Spleen (tissue), 13 donors: ENCODE measurements at regions of chr18 and their contacts with region 1.

Region 1: GRCh38 chr18:76709659-76710645 is 112.4 kb upstream of the ZNF236 start:
- DNase-seq: peak; percentile 87
- H3K4me3 ChIP-seq: peak overlapping the region in 1 of 8 donors; percentile 36
- H3K27ac ChIP-seq: no peak overlapping the region
- H3K4me1 ChIP-seq: peaks cover 0 to 8% (median 6%) of the 10 kb centered on the region in 6 donors
- H3K27me3 ChIP-seq: no peaks in the 10 kb centered on the region
- CTCF ChIP-seq: peak; percentile 59 to 92 (median 87)
- POLR2A ChIP-seq: no peak

Region 2: DNA sequence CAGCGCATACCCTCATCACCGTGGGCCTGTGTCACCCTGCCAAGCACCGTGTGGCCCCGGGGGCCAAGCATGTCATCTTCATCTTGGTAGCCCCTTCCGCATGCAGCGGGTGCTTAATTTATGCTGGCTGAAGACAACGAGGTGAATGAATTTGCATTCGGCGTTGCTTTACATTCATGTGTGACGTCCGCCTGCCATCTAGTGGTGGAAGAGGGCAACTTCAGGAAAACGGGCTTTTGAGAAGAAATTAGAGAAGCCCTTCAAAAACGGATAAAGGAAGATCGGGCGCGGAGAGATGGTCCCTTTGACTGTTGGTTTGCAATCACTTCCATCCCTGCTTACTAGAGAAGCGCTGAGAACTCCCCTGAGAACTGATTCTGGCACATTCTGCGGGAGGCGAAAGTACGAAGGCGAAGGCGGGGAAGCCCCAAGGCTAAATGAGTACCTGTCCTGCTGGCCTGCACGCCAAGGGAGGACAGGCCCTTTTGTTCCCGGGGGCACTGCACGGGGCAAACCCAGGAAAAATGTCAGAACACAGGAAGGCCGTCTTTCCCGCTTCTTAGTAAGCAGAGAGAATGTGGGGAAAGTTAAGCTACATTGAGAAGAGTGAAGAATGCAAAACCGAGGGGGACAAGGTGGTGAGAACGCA is 360.8 kb before region 1 on chr18:
- intact Hi-C with region 1: no loop called
- DNase-seq: no peak
- H3K4me3 ChIP-seq: peak overlapping the region in 1 of 8 donors; percentile 8
- H3K27ac ChIP-seq: no peak overlapping the region
- H3K4me1 ChIP-seq: peaks cover 0 to 11% (median 8%) of the 10 kb centered on the region in 6 donors
- H3K27me3 ChIP-seq: peaks cover 0 to 16% (median 0%) of the 10 kb centered on the region in 7 donors
- CTCF ChIP-seq: peak; percentile 61 to 88 (median 79)
- POLR2A ChIP-seq: no peak

Region 3: GRCh38 chr18:76398896-76399612 is 310.9 kb before region 1 on chr18:
- intact Hi-C with region 1: loop called (anchors 5 kb)
- DNase-seq: peak; percentile 94
- H3K4me3 ChIP-seq: no peak overlapping the region
- H3K27ac ChIP-seq: no peak overlapping the region
- H3K4me1 ChIP-seq: peaks cover 0 to 75% (median 22%) of the 10 kb centered on the region in 6 donors
- H3K27me3 ChIP-seq: no peaks in the 10 kb centered on the region
- CTCF ChIP-seq: peak; percentile 90 to 100 (median 97)
- POLR2A ChIP-seq: no peak

Region 4: GRCh38 chr18:76610933-76611749 is 98.8 kb before region 1 on chr18:
- intact Hi-C with region 1: no loop called
- DNase-seq: no peak
- H3K4me3 ChIP-seq: no peak overlapping the region
- H3K27ac ChIP-seq: no peak overlapping the region
- H3K4me1 ChIP-seq: no peaks in the 10 kb centered on the region
- H3K27me3 ChIP-seq: no peaks in the 10 kb centered on the region
- CTCF ChIP-seq: no peak
- POLR2A ChIP-seq: no peak